GM12878 (cell line): ENCODE measurements at regions of chr5 and their contacts with region 1.

Region 1: GRCh38 chr5:116766470-116766947 is 191.9 kb upstream of the SEMA6A start:
- DNase-seq: peak; percentile 70
- ATAC-seq: peak; percentile 46
- H3K4me3 ChIP-seq: peak overlapping the region; percentile 43; the same call in 1 of the 2 replicates
- H3K27ac ChIP-seq: no peak overlapping the region
- H3K4me1 ChIP-seq: peaks cover 25% of the 10 kb centered on the region
- H3K27me3 ChIP-seq: no peaks in the 10 kb centered on the region
- CTCF ChIP-seq: no peak
- EP300 ChIP-seq: peak in 1 of 2 experiments; percentile 71; a peak in 1 of 4 replicates
- POLR2A ChIP-seq: no peak
- RAD21 ChIP-seq: no peak

Region 2: DNA sequence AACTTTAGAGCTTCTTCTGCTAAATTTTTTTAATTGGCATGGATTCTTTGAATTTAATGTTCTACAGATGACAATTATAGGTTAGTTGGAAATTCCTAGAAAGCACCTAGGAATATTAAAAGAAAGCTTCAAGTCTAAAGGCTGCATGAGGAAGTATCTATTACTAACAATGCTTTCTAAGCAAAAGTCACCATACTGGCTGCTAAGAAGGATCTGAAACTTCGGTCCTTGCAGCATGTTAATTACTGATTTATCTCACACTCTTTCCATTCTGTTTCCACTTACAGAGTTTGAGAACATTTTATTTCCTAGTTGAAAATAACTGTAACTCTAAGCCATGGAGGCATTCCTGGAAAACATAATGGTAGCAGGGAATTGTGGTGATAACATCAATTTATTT is 200.3 kb before region 1 on chr5:
- CTCF ChIA-PET with region 1: interaction called, 8 read pairs
- POLR2A ChIA-PET with region 1: interaction called, 4 read pairs
- RAD21 ChIA-PET with region 1: interaction called, 15 read pairs
- SMC1A ChIA-PET with region 1: interaction called, 17 read pairs
- in situ Hi-C with region 1: no loop called
- intact Hi-C with region 1: no loop called
- DNase-seq: no peak
- ATAC-seq: peak; percentile 76
- H3K4me3 ChIP-seq: no peak overlapping the region
- H3K27ac ChIP-seq: no peak overlapping the region
- H3K4me1 ChIP-seq: no peaks in the 10 kb centered on the region
- H3K27me3 ChIP-seq: no peaks in the 10 kb centered on the region
- CTCF ChIP-seq: no peak
- EP300 ChIP-seq: no peak
- POLR2A ChIP-seq: no peak
- RAD21 ChIP-seq: no peak

Region 3: DNA sequence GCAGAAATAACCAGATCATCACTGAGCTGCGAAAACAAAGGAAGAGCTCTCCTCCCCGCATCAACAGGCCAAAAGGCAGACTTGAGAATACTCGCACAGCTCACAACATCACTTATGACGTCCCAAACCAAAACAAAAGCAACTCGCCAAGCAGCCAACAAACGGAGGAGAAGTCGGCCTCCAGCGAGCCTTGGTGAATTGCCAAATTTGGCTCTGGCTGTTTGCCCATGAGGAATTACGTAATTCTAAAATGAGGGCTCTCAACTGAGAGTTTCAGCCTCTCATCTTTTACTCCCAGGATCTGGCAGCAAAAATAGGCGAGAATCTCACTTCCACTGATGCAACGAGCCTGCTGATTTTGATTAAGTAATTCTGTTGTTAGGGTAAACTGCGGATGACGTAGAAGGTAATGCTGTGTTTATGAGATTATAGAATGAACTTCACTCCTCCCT is 140.2 kb before region 1 on chr5:
- CTCF ChIA-PET with region 1: no interaction called
- POLR2A ChIA-PET with region 1: interaction called, 3 read pairs
- RAD21 ChIA-PET with region 1: interaction called, 11 read pairs
- SMC1A ChIA-PET with region 1: interaction called, 19 read pairs
- in situ Hi-C with region 1: no loop called
- intact Hi-C with region 1: no loop called
- DNase-seq: no peak
- ATAC-seq: no peak
- H3K4me3 ChIP-seq: no peak overlapping the region
- H3K27ac ChIP-seq: no peak overlapping the region
- H3K4me1 ChIP-seq: peaks cover 6% of the 10 kb centered on the region
- H3K27me3 ChIP-seq: no peaks in the 10 kb centered on the region
- CTCF ChIP-seq: no peak
- EP300 ChIP-seq: no peak
- POLR2A ChIP-seq: no peak
- RAD21 ChIP-seq: no peak

Region 4: GRCh38 chr5:116658141-116658749 is 108.3 kb before region 1 on chr5:
- CTCF ChIA-PET with region 1: interaction called, 12 read pairs
- POLR2A ChIA-PET with region 1: interaction called, 19 read pairs
- RAD21 ChIA-PET with region 1: interaction called, 40 read pairs
- SMC1A ChIA-PET with region 1: interaction called, 103 read pairs
- in situ Hi-C with region 1: no loop called
- intact Hi-C with region 1: no loop called
- DNase-seq: no peak
- ATAC-seq: peak; percentile 52
- H3K4me3 ChIP-seq: no peak overlapping the region
- H3K27ac ChIP-seq: no peak overlapping the region
- H3K4me1 ChIP-seq: no peaks in the 10 kb centered on the region
- H3K27me3 ChIP-seq: no peaks in the 10 kb centered on the region
- CTCF ChIP-seq: no peak; a peak in 1 of 6 replicates
- EP300 ChIP-seq: no peak
- POLR2A ChIP-seq: no peak
- RAD21 ChIP-seq: no peak

Region 5: GRCh38 chr5:116696366-116696765 is 70.1 kb before region 1 on chr5:
- CTCF ChIA-PET with region 1: interaction called, 3 read pairs
- POLR2A ChIA-PET with region 1: interaction called, 5 read pairs
- RAD21 ChIA-PET with region 1: interaction called, 134 read pairs
- SMC1A ChIA-PET with region 1: interaction called, 132 read pairs
- in situ Hi-C with region 1: no loop called
- intact Hi-C with region 1: no loop called
- DNase-seq: no peak
- ATAC-seq: peak; percentile 87
- H3K4me3 ChIP-seq: no peak overlapping the region; the same call in 1 of the 2 replicates
- H3K27ac ChIP-seq: peak overlapping the region; percentile 11; the same call in 1 of the 2 replicates
- H3K4me1 ChIP-seq: peaks cover 25% of the 10 kb centered on the region
- H3K27me3 ChIP-seq: no peaks in the 10 kb centered on the region
- CTCF ChIP-seq: no peak
- EP300 ChIP-seq: peak; percentile 49 to 76; a peak in 2 of 4 replicates
- POLR2A ChIP-seq: no peak
- RAD21 ChIP-seq: peak; percentile 35; the same call in 1 of the 2 replicates

Region 6: DNA sequence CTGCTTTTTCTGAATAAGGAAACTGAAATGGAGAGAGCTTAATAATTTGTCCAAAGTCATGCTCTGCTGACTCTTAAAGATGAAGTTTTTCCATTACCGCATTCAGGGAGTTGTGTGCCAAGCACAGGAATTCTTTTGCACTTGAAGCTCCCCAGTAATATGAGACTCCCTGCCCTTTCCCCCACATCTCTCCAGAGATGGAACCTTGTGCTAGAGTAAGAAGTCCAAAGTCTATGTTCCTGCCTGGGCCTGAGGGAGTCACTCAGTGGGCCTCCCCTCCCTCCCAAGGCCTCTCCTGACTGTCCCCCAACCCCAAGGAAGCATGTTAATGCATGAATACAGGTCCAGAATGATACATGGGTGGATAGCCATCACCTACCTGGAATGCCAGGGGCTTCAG is 18.6 kb before region 1 on chr5:
- CTCF ChIA-PET with region 1: no interaction called
- POLR2A ChIA-PET with region 1: interaction called, 7 read pairs
- RAD21 ChIA-PET with region 1: interaction called, 6 read pairs
- SMC1A ChIA-PET with region 1: interaction called, 25 read pairs
- in situ Hi-C with region 1: no loop called
- intact Hi-C with region 1: no loop called
- DNase-seq: no peak
- ATAC-seq: no peak
- H3K4me3 ChIP-seq: no peak overlapping the region
- H3K27ac ChIP-seq: no peak overlapping the region
- H3K4me1 ChIP-seq: no peaks in the 10 kb centered on the region
- H3K27me3 ChIP-seq: no peaks in the 10 kb centered on the region
- CTCF ChIP-seq: no peak
- EP300 ChIP-seq: no peak
- POLR2A ChIP-seq: no peak
- RAD21 ChIP-seq: no peak

Region 7: GRCh38 chr5:117041926-117042595 is 275.6 kb after region 1 on chr5:
- CTCF ChIA-PET with region 1: no interaction called
- POLR2A ChIA-PET with region 1: no interaction called
- RAD21 ChIA-PET with region 1: no interaction called
- SMC1A ChIA-PET with region 1: no interaction called
- in situ Hi-C with region 1: no loop called
- intact Hi-C with region 1: no loop called
- DNase-seq: no peak
- ATAC-seq: no peak
- H3K4me3 ChIP-seq: no peak overlapping the region
- H3K27ac ChIP-seq: no peak overlapping the region
- H3K4me1 ChIP-seq: no peaks in the 10 kb centered on the region
- H3K27me3 ChIP-seq: no peaks in the 10 kb centered on the region
- CTCF ChIP-seq: no peak
- EP300 ChIP-seq: no peak
- POLR2A ChIP-seq: no peak
- RAD21 ChIP-seq: no peak